ENCODE measurements at regions of chr11 and their contacts with region 1.

Region 1: GRCh38 chr11:3939211-3939610 is 83.7 kb downstream of the STIM1 start:
- DNase-seq: no peak
- ATAC-seq: no peak
- H3K4me3 Mint-ChIP-seq: no peak overlapping the region
- H3K27ac Mint-ChIP-seq: no peak overlapping the region
- H3K4me1 Mint-ChIP-seq: peaks cover 83% of the 10 kb centered on the region
- H3K27me3 Mint-ChIP-seq: no peaks in the 10 kb centered on the region

Region 2: DNA sequence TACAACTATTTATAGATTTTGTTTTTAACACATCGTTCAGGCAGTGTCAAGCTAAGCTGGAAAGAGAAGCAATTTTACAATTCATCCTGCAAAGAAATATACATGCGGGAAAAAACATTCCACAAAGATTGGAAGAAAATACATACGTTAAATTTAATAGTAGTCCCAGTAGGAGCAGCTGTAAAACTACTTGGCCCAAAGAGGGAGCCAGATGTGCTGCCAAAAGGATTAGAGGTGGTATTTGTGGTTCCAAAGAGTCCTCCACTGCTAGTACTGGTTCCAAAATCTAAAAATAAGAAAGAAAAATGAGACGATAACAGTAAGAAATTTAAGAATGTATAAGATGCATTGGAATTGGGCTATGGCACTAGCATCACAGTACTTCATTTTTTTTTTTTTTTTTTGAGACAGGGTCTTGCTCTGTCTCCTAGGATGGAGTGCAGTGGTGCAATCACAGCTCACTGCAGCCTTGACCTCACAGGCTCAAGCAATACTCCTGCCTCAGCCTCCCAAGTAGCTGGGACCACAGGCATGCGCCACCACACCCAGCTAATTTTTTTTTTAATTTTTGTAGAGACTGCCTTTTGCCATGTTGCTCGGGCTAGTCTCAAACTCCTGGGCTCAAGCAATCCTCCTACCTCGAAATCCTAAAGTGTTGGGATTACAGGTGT is 163.3 kb before region 1 on chr11:
- CTCF ChIA-PET with region 1: no interaction called
- POLR2A ChIA-PET with region 1: no interaction called
- DNase-seq: no peak
- ATAC-seq: no peak
- H3K4me3 Mint-ChIP-seq: no peak overlapping the region
- H3K27ac Mint-ChIP-seq: no peak overlapping the region
- H3K4me1 Mint-ChIP-seq: no peaks in the 10 kb centered on the region
- H3K27me3 Mint-ChIP-seq: no peaks in the 10 kb centered on the region

Region 3: DNA sequence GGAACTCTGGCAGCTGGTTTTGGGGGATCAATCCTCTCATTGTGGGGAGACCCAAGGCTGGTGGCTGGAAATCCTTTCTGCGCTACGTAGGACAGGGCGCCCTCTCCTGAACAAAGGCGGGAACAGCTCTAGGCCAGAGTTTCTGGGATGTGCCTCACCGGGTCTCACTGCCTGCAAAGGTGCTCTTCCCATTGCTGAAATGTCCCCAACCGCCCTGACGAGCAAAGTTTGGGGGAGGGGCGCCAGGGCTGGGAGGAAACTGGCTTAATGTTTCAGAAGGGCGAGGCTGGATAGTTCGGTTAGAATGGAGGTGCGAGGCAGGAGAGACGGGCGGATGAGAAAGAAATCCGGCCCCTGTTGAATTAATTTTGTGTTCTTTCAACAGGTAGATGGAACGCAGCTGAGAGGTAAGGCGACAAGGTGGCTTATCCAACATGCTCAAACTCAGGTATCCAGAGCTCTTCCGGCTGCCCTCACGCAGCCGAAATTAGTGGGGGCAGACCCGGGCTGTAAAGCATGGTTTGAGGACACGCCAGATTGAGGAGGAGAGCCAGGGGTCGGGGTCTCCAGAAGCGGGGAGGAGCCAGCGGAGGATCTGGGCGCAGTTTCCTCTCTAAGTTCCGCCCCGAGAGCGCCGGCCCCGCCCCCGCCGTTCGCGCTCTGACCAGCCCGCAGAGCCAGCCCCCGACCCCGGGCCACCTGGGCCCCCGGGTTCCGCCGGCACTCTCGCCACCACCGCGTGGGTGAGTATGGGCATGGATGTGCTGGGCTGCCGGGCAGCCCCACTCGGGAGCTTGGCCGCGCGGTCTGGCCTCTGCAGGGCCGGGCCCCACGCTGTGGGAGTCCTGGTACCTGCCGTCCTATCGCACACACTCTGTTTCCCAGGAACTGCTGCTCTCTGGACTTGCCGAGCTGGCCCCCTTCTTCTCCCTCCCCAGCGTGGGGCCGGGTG is 131.0 kb before region 1 on chr11 and contains the start of gene PGAP2:
- CTCF ChIA-PET with region 1: no interaction called
- POLR2A ChIA-PET with region 1: no interaction called
- DNase-seq: peak; percentile 64
- ATAC-seq: peak; percentile 87
- H3K4me3 Mint-ChIP-seq: peak within 1 kb of the TSS; percentile 93
- H3K27ac Mint-ChIP-seq: peak within 1 kb of the TSS; percentile 85
- H3K4me1 Mint-ChIP-seq: peaks cover 21% of the 10 kb centered on the region
- H3K27me3 Mint-ChIP-seq: no peaks in the 10 kb centered on the region
- total RNA-seq, gene PGAP2: 23.8 to 25.7 TPM

Region 4: DNA sequence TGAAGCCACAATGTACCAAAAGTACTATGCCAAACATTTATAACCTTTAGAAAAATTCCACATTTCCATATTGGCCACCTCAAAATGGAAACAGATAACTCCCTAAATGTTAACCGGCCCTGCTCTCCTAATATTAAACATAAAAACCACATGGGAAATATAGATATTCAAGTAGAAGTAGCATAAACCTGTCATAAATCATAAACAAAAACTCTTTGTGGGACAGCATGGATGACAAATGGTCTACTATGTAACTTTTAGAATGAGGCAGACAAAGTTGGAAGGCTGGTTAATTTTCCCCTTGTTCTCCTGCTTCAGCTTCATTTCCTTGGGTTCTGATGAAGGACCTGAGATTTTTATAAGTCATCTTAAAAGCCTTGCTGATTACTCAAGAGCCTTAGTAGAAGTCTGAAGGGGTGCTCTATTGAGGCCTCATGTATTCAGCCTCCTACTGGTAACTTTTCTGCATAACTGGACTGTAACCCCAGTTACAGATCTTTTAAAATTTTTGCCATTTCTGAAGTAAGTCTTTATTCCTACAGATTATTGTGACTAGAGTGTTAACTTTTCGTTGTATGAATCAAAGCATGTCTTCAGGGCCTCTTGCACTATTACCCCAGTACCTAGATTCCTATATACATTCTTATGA is 32.7 kb after region 1 on chr11:
- CTCF ChIA-PET with region 1: interaction called, 10 read pairs
- POLR2A ChIA-PET with region 1: no interaction called
- DNase-seq: no peak
- ATAC-seq: no peak
- H3K4me3 Mint-ChIP-seq: no peak overlapping the region
- H3K27ac Mint-ChIP-seq: no peak overlapping the region
- H3K4me1 Mint-ChIP-seq: peaks cover 53% of the 10 kb centered on the region
- H3K27me3 Mint-ChIP-seq: no peaks in the 10 kb centered on the region

Region 5: DNA sequence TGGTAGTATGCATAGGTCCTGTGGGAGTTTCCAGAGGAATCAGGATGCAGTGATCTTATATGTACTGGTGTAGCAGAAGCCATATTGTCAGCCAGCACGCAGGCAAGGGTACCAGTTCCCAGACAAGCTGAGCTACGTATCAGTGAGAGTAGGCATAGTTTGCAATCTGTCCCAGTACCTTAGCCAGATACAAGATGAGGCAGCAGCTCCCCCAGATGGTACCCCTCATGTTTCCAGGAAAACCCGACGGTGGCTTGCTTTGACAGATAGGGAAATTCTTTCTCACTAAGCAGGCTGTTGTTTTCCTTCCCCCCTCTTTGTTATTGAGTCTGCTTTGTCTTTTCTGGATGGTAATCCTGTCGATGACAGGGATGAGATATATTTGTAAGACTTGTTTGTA is 45.7 kb after region 1 on chr11:
- CTCF ChIA-PET with region 1: interaction called, 19 read pairs
- POLR2A ChIA-PET with region 1: no interaction called
- DNase-seq: peak; percentile 64
- ATAC-seq: peak; percentile 70
- H3K4me3 Mint-ChIP-seq: no peak overlapping the region
- H3K27ac Mint-ChIP-seq: peak overlapping the region; percentile 9
- H3K4me1 Mint-ChIP-seq: peaks cover 82% of the 10 kb centered on the region
- H3K27me3 Mint-ChIP-seq: no peaks in the 10 kb centered on the region

Region 6: DNA sequence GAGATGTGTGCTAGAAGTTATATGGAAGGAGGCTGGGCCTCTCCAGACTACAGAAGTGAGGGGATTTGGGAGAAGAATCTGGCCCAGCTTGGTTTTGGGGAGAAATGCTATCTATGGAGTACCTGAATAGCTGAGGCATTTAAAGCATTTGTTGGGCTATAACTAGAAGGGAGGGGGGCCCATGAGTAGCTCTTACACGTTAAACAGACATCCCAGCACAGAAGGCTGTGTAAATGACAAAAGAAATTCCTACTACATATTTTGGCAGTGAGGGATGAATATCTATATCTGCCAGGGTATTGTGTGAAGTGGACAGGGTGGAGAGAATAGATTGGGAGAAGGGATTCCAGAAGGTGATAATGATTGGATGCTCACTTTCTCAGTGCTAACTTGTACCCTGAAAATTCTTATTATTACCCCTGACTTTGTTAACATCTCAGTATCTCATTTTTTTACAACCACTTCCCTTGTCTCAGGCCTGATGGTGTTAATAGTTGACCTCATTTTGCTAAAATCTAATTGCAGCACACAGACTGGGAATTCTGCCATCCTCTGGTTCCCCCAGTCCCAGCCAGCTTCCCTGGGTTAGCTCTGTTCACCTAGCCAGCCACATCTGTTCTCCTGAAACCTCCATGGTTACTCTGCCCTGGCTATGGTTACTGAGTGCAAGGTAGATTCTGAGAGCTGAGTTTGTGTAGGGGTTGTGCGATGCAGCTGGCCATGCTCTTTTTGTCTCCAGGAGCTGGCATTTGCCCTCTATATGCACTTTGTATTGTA is 126.6 kb after region 1 on chr11:
- CTCF ChIA-PET with region 1: interaction called, 11 read pairs
- POLR2A ChIA-PET with region 1: interaction called, 3 read pairs
- DNase-seq: no peak
- ATAC-seq: no peak
- H3K4me3 Mint-ChIP-seq: no peak overlapping the region
- H3K27ac Mint-ChIP-seq: no peak overlapping the region
- H3K4me1 Mint-ChIP-seq: peaks cover 55% of the 10 kb centered on the region
- H3K27me3 Mint-ChIP-seq: no peaks in the 10 kb centered on the region

Region 7: DNA sequence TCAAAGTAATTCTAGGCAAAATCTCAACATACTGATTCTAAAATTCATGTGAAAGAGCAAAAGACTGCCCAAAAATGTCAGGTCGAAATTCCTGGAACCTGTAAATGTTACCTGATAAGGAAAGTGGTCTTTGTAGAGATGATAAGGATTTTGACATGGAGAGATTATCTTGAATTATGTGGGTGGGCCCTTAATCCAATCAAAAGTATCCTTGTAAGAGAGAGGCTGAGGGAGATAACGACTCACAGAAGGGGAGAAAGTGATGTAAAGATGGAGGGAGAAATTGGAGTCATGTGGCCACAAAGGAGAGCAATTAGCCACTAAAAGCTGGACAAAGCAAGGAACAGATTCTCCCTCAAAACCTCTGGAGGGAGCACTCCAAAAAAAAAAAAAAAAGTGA is 175.9 kb after region 1 on chr11:
- CTCF ChIA-PET with region 1: no interaction called
- POLR2A ChIA-PET with region 1: no interaction called
- DNase-seq: no peak
- ATAC-seq: no peak
- H3K4me3 Mint-ChIP-seq: no peak overlapping the region
- H3K27ac Mint-ChIP-seq: no peak overlapping the region
- H3K4me1 Mint-ChIP-seq: peaks cover 6% of the 10 kb centered on the region
- H3K27me3 Mint-ChIP-seq: no peaks in the 10 kb centered on the region